Sciatic nerve (tissue), 2 donors: ENCODE measurements at regions of chr10 and their contacts with region 1.

Region 1: GRCh38 chr10:71569775-71570588 is 149.6 kb downstream of the C10orf105 start:
- DNase-seq: peak; percentile 91
- ATAC-seq: peak; percentile 69

Region 2: DNA sequence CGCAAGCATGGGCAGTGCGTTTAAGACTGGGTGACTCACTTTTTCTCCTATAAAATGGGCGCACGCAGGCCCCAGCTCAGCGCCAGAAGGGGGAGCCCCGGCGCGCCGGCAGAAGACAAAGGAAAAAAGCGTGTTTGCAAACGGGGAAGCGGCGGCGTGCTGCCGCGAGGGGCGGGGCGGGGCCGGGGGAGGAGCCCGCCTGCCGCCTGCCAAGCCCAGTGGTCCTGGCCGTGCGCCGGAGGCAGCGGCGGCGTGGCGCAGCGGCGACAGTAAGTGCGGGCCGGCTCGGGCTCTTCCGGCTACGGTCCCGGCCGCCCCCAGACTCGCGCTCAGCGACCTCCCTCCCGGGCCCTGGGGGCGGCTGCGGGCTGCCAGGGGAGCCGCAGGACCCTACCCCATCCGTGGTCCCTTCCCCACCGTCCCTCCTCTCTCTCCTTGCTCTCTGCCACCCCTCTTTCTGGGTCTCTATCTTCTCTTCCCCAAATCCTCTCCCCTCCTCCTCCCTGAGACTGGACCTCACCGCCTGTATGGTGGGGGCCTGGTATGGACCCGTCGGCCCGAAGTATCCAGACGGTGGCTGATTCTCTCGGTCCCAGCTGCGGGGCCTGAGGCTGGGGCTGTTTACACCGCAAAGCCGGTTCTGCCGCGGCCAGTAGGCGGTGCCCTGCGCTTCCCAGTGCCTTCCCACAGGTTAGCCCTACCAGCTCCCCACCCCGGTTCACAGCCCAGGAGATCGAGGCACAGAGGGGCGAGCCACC is 250.8 kb before region 1 on chr10 and contains the start of gene SLC29A3:
- intact Hi-C with region 1: loop called (anchors 10 kb)
- DNase-seq: peak; percentile 89
- ATAC-seq: peak; percentile 88
- total RNA-seq, gene SLC29A3: 8.7 TPM

Region 3: GRCh38 chr10:71396084-71396720 is 173.8 kb before region 1 on chr10:
- intact Hi-C with region 1: loop called (anchors 5 kb)
- DNase-seq: peak; percentile 76
- ATAC-seq: peak; percentile 89

Region 4: GRCh38 chr10:71582019-71582418 is 12.0 kb after region 1 on chr10:
- intact Hi-C with region 1: no loop called
- DNase-seq: no peak
- ATAC-seq: no peak

Region 5: GRCh38 chr10:71708301-71708703 is 138.3 kb after region 1 on chr10:
- intact Hi-C with region 1: no loop called
- DNase-seq: peak; percentile 83
- ATAC-seq: peak; percentile 23

Region 6: GRCh38 chr10:71963756-71964668 is 394.0 kb after region 1 on chr10 and contains the start of gene CHST3:
- intact Hi-C with region 1: no loop called
- DNase-seq: peak; percentile 89
- ATAC-seq: peak; percentile 78
- total RNA-seq, gene CHST3: 36.5 TPM